Right ventricle myocardium inferior (tissue), 1 donor: ENCODE measurements at regions of chr4 and their contacts with region 1.

Region 1: GRCh38 chr4:114072781-114073180 is 93.3 kb upstream of the ARSJ start:
- DNase-seq: no peak
- ATAC-seq: no peak

Region 2: DNA sequence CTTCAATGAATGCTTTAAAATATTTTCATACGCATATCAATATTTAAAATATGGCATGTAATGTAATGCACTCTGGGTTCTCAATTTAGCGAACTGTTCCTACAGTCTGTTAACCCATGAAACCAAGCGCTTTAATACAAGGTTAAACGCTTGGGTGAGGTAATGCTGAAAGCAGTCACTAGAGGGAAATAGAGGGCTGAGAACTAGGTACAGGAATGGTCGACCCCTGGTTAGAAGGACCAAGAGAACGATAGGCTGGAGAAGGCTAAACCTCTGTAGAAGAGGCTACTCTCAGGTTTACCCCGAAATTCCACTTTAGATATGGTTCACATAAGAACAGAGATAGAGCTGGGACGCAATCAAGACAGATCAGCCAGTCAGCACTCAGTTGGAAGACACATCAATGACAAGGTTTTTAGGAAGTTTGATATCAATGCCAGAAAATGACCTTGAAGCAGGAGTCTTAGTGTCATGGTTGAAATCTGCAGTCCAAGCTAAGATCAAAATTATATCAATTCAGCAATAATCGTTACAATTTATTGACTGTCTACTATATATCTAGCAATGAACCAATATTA is 120.2 kb before region 1 on chr4:
- intact Hi-C with region 1: loop called (anchors 5 kb)
- DNase-seq: no peak
- ATAC-seq: peak; percentile 57